B cell (primary cell): ENCODE measurements at regions of chr10 and their contacts with region 1.

Region 1: DNA sequence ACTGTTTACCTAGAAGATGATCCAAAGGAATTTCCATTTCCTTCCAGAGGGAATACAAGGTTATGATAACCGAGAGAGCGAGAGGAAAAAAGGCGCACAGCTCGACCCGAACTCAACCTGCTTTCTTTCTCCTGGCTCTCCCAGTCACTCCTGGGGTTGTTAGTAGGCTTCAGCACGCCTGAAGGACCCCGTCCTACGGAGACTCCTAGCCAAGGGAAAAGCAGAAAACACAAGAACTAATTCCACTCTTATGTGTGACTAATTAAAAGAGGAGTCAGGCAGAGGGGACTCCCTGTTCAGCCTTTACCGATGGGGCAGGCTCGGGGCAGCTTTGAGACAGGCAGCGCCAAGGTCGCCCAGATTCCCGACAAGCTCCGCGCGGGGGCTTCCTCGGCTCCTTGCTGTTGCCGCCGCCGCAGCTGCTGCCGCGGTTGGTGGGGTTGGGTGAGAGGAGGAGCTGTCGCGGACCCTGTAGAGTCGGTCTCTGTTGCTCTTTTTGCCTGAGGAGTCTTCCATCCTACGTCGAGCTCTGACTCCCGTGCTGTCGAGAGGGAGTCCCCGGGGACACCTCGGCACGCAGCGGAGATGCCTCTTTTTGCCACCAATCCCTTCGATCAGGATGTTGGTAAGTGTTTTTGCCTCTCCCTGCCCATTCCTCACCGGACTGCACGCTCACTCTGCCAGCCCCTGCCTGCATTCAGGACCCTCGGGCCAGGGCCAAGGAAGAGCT is at the start of gene STAM:
- DNase-seq: peak; percentile 96
- ATAC-seq: peak; percentile 90
- H3K4me3 ChIP-seq: peak within 1 kb of the TSS; percentile 71 to 99 (median 86)
- H3K4me3 Mint-ChIP-seq: peak within 1 kb of the TSS; percentile 98
- H3K27ac ChIP-seq: peak within 1 kb of the TSS; percentile 96 to 99
- H3K27ac Mint-ChIP-seq: peak within 1 kb of the TSS; percentile 100
- H3K4me1 ChIP-seq: peaks cover 35 to 43% of the 10 kb centered on the region in 2 donors
- H3K4me1 Mint-ChIP-seq: peaks cover 51% of the 10 kb centered on the region
- H3K27me3 ChIP-seq: no peaks in the 10 kb centered on the region
- H3K27me3 Mint-ChIP-seq: no peaks in the 10 kb centered on the region
- CTCF ChIP-seq: no peak
- total RNA-seq, gene STAM: 31.6 and 35.1 TPM in 2 replicates

Region 2: DNA sequence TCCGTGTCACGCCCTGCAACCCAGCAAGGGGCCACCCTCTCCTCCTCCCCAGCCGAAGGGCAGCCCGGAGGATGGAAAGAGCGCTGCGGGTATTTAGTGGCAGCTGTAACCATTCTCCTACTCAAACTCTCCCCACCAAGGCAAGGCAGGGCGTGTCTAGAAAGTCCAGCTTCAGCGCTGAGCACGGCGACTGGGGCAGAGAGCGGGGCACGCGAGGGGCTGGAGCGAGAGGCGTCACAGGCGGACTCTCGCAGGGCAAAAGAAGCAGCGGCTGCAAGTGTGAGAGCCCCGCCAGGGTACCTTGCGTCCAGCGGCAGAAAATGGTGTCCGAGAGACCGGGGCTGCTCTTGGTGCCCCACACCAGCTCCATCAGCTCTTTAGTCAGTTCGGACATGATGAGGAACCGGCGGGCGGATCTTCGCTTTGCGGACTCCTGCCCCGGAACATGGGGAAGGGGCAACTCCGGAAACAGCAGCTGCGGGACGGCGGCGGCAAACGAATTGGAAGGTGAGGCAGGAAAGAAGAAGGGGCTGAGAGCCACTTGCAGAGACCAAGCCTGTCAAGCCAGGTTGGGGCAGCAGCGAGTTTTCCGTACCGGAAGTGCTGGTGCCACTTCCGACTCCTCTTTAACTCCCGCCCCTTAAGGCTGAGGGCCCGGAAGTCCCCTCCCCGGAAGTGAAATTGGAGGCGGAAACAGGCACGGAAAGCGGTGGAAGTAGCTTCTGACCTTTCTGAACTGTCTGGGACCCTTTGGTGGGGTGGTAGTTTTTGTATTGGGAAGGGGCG is 1783.8 kb before region 1 on chr10 and contains the start of gene MINDY3:
- CTCF ChIA-PET with region 1: no interaction called
- POLR2A ChIA-PET with region 1: no interaction called
- intact Hi-C with region 1: loop called (anchors 2 kb)
- DNase-seq: peak; percentile 89
- ATAC-seq: peak; percentile 93
- H3K4me3 ChIP-seq: peak within 1 kb of the TSS; percentile 86 to 94 (median 92)
- H3K4me3 Mint-ChIP-seq: peak within 1 kb of the TSS; percentile 100
- H3K27ac ChIP-seq: peak within 1 kb of the TSS; percentile 76 to 85
- H3K27ac Mint-ChIP-seq: peak within 1 kb of the TSS; percentile 97
- H3K4me1 ChIP-seq: peaks cover 18 to 21% of the 10 kb centered on the region in 2 donors
- H3K4me1 Mint-ChIP-seq: peaks cover 38% of the 10 kb centered on the region
- H3K27me3 ChIP-seq: peaks cover 0 to 5% (median 2%) of the 10 kb centered on the region in 4 experiments
- H3K27me3 Mint-ChIP-seq: peaks cover 18% of the 10 kb centered on the region
- CTCF ChIP-seq: no peak
- total RNA-seq, gene MINDY3: 29.3 and 31.9 TPM in 2 replicates

Region 3: GRCh38 chr10:17257466-17258321 is 386.2 kb before region 1 on chr10:
- CTCF ChIA-PET with region 1: no interaction called
- POLR2A ChIA-PET with region 1: no interaction called
- intact Hi-C with region 1: no loop called
- DNase-seq: peak; percentile 74
- ATAC-seq: peak; percentile 64
- H3K4me3 ChIP-seq: no peak overlapping the region
- H3K4me3 Mint-ChIP-seq: no peak overlapping the region
- H3K27ac ChIP-seq: no peak overlapping the region
- H3K27ac Mint-ChIP-seq: no peak overlapping the region
- H3K4me1 ChIP-seq: peaks cover 0 to 3% of the 10 kb centered on the region in 2 donors
- H3K4me1 Mint-ChIP-seq: peaks cover 4% of the 10 kb centered on the region
- H3K27me3 ChIP-seq: no peaks in the 10 kb centered on the region
- H3K27me3 Mint-ChIP-seq: peaks cover 10% of the 10 kb centered on the region
- CTCF ChIP-seq: peak; percentile 90

Region 4: DNA sequence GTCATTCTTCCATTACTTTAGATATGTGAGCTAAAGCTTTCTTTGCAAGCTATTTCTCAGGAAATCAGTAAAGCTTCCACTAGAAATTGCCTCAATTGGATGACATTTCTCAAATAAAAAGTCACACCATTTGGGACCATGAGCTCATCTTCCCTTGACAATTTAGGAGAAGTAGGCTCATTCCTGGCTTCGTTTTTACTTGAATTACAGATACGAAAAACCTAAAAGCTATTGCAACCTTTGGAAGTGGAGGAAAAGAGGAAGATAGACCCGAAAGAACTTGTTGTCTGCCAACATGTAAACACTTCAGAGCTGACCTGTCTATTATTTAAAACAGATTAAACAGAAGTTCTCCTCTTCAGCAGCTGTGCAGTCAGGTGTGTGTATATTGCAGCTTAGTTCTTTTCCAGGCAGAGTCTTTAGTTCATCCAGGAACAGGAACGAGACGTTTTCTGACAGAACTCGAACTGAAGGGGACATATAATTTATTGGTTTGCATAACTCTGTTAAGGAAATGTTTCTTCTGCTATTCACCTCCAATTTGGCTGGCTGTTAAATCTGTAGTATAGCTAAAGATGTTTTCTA is 146.4 kb before region 1 on chr10:
- CTCF ChIA-PET with region 1: no interaction called
- POLR2A ChIA-PET with region 1: no interaction called
- intact Hi-C with region 1: no loop called
- DNase-seq: no peak
- ATAC-seq: no peak
- H3K4me3 ChIP-seq: no peak overlapping the region
- H3K4me3 Mint-ChIP-seq: no peak overlapping the region
- H3K27ac ChIP-seq: no peak overlapping the region
- H3K27ac Mint-ChIP-seq: no peak overlapping the region
- H3K4me1 ChIP-seq: no peaks in the 10 kb centered on the region
- H3K4me1 Mint-ChIP-seq: no peaks in the 10 kb centered on the region
- H3K27me3 ChIP-seq: no peaks in the 10 kb centered on the region
- H3K27me3 Mint-ChIP-seq: peaks cover 7% of the 10 kb centered on the region
- CTCF ChIP-seq: no peak

Region 5: GRCh38 chr10:17655567-17656146 is 11.7 kb after region 1 on chr10:
- CTCF ChIA-PET with region 1: interaction called, 4 read pairs
- POLR2A ChIA-PET with region 1: no interaction called
- intact Hi-C with region 1: loop called (anchors 1 kb)
- DNase-seq: peak; percentile 49
- ATAC-seq: peak; percentile 84
- H3K4me3 ChIP-seq: peak overlapping the region in 1 of 5 experiments; percentile 21
- H3K4me3 Mint-ChIP-seq: peak overlapping the region; percentile 29
- H3K27ac ChIP-seq: peak overlapping the region; percentile 47 to 48
- H3K27ac Mint-ChIP-seq: peak overlapping the region; percentile 11
- H3K4me1 ChIP-seq: peaks cover 7 to 11% of the 10 kb centered on the region in 2 donors
- H3K4me1 Mint-ChIP-seq: peaks cover 50% of the 10 kb centered on the region
- H3K27me3 ChIP-seq: no peaks in the 10 kb centered on the region
- H3K27me3 Mint-ChIP-seq: no peaks in the 10 kb centered on the region
- CTCF ChIP-seq: no peak

Region 6: DNA sequence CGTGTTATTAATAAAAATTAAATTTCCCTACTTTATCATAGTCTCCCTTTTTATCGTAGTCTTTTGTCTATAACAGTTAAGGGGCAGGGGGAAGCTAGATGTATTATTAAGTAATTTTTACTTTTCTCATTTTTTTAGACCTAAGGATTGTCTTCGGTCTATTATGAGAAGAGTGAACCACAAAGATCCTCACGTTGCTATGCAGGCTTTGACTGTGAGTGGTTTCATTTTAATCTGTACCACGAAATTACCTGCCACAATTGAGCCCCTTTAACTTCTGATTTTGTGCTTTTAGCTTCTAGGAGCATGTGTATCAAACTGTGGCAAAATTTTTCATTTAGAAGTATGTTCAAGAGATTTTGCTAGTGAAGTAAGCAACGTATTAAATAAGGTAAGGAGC is 40.6 kb after region 1 on chr10:
- CTCF ChIA-PET with region 1: interaction called, 5 read pairs
- POLR2A ChIA-PET with region 1: no interaction called
- intact Hi-C with region 1: loop called (anchors 5 kb)
- DNase-seq: no peak
- ATAC-seq: no peak
- H3K4me3 ChIP-seq: no peak overlapping the region
- H3K4me3 Mint-ChIP-seq: peak overlapping the region; percentile 32
- H3K27ac ChIP-seq: no peak overlapping the region
- H3K27ac Mint-ChIP-seq: no peak overlapping the region
- H3K4me1 ChIP-seq: peaks cover 3 to 14% of the 10 kb centered on the region in 2 donors
- H3K4me1 Mint-ChIP-seq: peaks cover 34% of the 10 kb centered on the region
- H3K27me3 ChIP-seq: no peaks in the 10 kb centered on the region
- H3K27me3 Mint-ChIP-seq: no peaks in the 10 kb centered on the region
- CTCF ChIP-seq: no peak

Region 7: DNA sequence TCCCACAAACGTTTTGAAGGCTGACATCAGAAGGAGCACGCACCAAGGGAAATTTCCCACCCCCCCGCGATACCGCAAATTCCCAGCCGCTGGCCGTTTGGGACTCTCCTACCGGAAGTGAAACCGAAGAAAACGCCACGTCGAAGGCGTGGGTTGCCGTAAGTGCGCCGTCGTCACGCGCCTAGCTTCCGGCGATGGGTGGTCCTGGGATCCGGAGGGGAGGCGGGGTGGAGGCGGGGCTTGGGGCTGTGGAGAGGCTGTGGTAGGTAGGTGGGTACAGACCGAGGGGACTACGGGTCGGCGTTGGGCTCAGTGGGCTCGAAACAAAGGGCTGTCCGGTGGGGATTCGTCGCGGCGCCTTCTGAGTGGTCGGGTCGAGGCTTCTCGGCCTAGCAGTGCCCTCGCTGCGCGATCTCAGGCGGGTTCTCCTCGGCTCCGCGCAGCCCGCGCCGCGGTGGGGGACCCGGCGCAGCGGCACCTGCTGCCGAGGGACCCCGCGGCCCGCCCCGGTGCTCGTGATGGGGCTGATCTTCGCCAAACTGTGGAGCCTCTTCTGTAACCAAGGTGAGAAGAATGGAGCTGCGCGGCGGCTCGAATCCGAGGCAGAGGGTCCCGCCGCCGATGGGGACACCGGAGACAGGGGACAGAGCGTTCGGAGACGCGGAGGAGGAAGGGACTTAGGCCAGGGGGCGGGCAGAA is 1015.3 kb after region 1 on chr10 and contains the start of gene ARL5B:
- CTCF ChIA-PET with region 1: no interaction called
- POLR2A ChIA-PET with region 1: no interaction called
- intact Hi-C with region 1: loop called (anchors 1 kb)
- DNase-seq: peak; percentile 99
- ATAC-seq: peak; percentile 96
- H3K4me3 ChIP-seq: peak within 1 kb of the TSS; percentile 93 to 96 (median 94)
- H3K4me3 Mint-ChIP-seq: peak within 1 kb of the TSS; percentile 100
- H3K27ac ChIP-seq: peak within 1 kb of the TSS; percentile 99
- H3K27ac Mint-ChIP-seq: peak within 1 kb of the TSS; percentile 99
- H3K4me1 ChIP-seq: peaks cover 25 to 27% of the 10 kb centered on the region in 2 donors
- H3K4me1 Mint-ChIP-seq: peaks cover 40% of the 10 kb centered on the region
- H3K27me3 ChIP-seq: no peaks in the 10 kb centered on the region
- H3K27me3 Mint-ChIP-seq: no peaks in the 10 kb centered on the region
- CTCF ChIP-seq: no peak
- total RNA-seq, gene ARL5B: 12.2 and 13.4 TPM in 2 replicates